Calu3 (cell line): ENCODE measurements at regions of chr11 and their contacts with region 1.

Region 1: DNA sequence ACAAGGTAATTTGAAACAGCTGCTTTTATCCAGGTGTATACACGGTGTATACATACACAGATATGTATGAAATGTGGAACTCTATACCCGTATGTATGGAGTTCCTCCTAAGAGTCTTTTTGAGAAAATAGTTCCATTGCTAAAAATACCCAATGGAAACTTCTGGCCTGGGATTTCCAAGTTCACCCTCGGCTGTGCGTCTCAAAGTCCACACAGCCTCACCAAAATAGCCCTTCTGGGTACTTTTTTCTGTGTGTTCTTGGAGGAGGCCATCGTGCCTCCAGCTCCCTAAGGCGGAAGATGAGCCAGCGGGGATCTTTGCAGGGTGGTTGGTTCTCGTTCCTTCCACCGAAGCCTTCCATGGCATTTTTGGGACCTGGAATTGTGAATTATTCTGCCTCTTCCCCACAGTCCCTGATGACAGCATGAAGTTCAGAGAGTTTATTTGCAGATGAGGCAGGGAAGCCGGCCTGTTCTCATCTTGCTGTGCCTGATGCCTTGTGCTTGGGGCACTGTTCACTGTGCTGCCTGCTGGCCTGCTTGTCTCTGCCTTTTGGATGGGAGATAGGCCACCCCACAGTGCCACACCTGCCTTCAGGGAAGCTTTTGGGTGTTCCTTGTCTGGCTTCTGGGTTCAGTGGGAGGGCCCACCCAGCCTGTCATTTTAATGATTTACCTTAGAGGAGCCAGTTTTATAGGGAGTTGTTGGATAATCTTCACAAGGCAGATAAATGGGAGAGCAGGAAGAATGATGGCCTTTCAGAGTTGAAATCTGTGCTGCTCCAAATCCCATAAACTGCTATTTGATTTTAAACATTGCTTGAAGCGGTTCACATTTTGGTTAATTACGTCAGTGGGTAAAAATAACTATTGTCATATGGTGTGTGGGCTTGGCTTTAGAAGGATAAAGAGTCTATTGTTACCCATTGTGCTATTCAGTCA is 112.7 kb upstream of the OR4B1 start:
- DNase-seq: peak; percentile 67
- H3K4me3 Mint-ChIP-seq: peak overlapping the region; percentile 63
- H3K27ac Mint-ChIP-seq: peak overlapping the region; percentile 88
- H3K4me1 Mint-ChIP-seq: peaks cover 92% of the 10 kb centered on the region
- H3K27me3 Mint-ChIP-seq: no peaks in the 10 kb centered on the region
- CTCF ChIP-seq: no peak

Region 2: GRCh38 chr11:47991266-47991830 is 112.5 kb before region 1 on chr11:
- CTCF ChIA-PET with region 1: interaction called, 4 read pairs
- intact Hi-C with region 1: loop called (anchors 1 kb)
- DNase-seq: peak; percentile 72
- H3K4me3 Mint-ChIP-seq: peak overlapping the region; percentile 64
- H3K27ac Mint-ChIP-seq: peak overlapping the region; percentile 98
- H3K4me1 Mint-ChIP-seq: peaks cover 60% of the 10 kb centered on the region
- H3K27me3 Mint-ChIP-seq: no peaks in the 10 kb centered on the region
- CTCF ChIP-seq: no peak